IMR-90 (cell line): ENCODE measurements at regions of chr15 and their contacts with region 1.

Region 1: GRCh38 chr15:51172193-51172592 is 77.5 kb upstream of the TNFAIP8L3 start:
- DNase-seq: peak; percentile 24
- ATAC-seq: peak; percentile 91
- H3K4me3 ChIP-seq: no peak overlapping the region
- H3K27ac ChIP-seq: no peak overlapping the region
- H3K4me1 ChIP-seq: peaks cover 5% of the 10 kb centered on the region; the same call in 1 of the 2 replicates
- H3K27me3 ChIP-seq: no peaks in the 10 kb centered on the region
- CTCF ChIP-seq: no peak
- POLR2A ChIP-seq: no peak
- RAD21 ChIP-seq: no peak

Region 2: GRCh38 chr15:51186181-51186705 is 14.1 kb after region 1 on chr15:
- CTCF ChIA-PET with region 1: interaction called, 20 read pairs
- POLR2A ChIA-PET with region 1: no interaction called
- dilution Hi-C with region 1: no loop called
- in situ Hi-C with region 1: no loop called
- intact Hi-C with region 1: loop called (anchors 1 kb)
- DNase-seq: no peak
- ATAC-seq: no peak
- H3K4me3 ChIP-seq: no peak overlapping the region
- H3K27ac ChIP-seq: no peak overlapping the region
- H3K4me1 ChIP-seq: no peaks in the 10 kb centered on the region
- H3K27me3 ChIP-seq: peaks cover 58% of the 10 kb centered on the region
- CTCF ChIP-seq: no peak
- POLR2A ChIP-seq: no peak
- RAD21 ChIP-seq: no peak